ENCODE measurements at regions of chr11 and their contacts with region 1.

Region 1: GRCh38 chr11:86818466-86819192 is 18.3 kb downstream of the PRSS23 start:
- DNase-seq: no peak

Region 2: GRCh38 chr11:86608251-86608799 is 210.3 kb before region 1 on chr11:
- intact Hi-C with region 1: loop called in 1 of 2 experiments (anchors 5 kb)
- DNase-seq: no peak

Measured in posterior vena cava (tissue), 2 donors.